Activated naive CD4-positive, alpha-beta T cell treated with anti-CD3 and anti-CD28 coated beads for 36 hours (primary cell): ENCODE measurements at regions of chr3 and their contacts with region 1.

Region 1: GRCh38 chr3:128426128-128426921 is 40.4 kb downstream of the DNAJB8 start:
- DNase-seq: peak; percentile 56
- H3K4me3 Mint-ChIP-seq: no peak overlapping the region
- H3K27ac Mint-ChIP-seq: no peak overlapping the region
- H3K4me1 Mint-ChIP-seq: no peaks in the 10 kb centered on the region
- H3K27me3 Mint-ChIP-seq: peaks cover 21% of the 10 kb centered on the region

Region 2: GRCh38 chr3:128095222-128095703 is 331.1 kb before region 1 on chr3:
- CTCF ChIA-PET with region 1: no interaction called
- intact Hi-C with region 1: loop called (anchors 5 kb)
- DNase-seq: peak; percentile 87
- H3K4me3 Mint-ChIP-seq: no peak overlapping the region
- H3K27ac Mint-ChIP-seq: no peak overlapping the region
- H3K4me1 Mint-ChIP-seq: peaks cover 5% of the 10 kb centered on the region
- H3K27me3 Mint-ChIP-seq: no peaks in the 10 kb centered on the region

Region 3: DNA sequence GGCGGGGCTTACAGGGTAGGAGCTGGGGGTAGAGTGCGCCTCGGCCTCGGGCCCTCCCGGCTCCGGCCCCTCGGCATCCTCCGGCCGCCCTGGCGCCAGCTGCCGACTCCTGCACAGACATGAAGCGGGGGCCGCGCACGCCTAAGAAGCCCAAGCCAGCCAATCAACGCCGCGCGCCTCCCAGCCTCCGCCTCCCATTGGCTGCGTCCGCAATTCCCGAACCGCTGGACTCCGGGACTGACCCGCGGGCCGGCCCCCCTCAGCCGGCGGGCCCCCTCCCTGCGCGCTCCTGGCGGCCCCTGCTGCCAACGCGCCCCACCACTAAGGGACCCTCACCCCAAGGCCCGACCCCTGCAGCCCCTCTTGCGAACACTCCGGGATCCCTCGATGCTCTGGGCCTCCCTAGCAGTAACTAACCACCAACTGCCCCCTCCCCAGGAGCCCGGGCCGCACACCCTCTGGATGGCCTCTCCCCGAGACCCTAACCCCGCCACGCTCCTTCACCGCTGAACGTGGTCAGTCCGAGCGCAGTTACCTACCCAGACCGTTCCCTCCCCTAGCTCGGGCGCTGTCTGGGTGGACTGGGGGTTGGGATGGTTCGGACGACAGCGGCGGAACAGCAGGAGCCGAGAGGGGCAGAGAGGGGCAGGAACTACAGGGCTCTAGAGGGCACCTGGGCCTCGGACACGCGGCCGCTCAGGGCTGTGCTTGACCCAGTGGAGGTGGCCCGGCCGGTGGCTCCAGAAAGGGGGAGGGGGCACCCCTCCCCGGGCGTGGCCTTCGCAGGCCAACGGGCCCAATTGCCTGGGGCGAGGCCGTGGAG is 61.7 kb after region 1 on chr3:
- CTCF ChIA-PET with region 1: interaction called, 19 read pairs
- intact Hi-C with region 1: loop called (anchors 1 kb)
- DNase-seq: peak; percentile 44
- H3K4me3 Mint-ChIP-seq: peak overlapping the region; percentile 72
- H3K27ac Mint-ChIP-seq: no peak overlapping the region
- H3K4me1 Mint-ChIP-seq: peaks cover 45% of the 10 kb centered on the region
- H3K27me3 Mint-ChIP-seq: peaks cover 72% of the 10 kb centered on the region

Region 4: DNA sequence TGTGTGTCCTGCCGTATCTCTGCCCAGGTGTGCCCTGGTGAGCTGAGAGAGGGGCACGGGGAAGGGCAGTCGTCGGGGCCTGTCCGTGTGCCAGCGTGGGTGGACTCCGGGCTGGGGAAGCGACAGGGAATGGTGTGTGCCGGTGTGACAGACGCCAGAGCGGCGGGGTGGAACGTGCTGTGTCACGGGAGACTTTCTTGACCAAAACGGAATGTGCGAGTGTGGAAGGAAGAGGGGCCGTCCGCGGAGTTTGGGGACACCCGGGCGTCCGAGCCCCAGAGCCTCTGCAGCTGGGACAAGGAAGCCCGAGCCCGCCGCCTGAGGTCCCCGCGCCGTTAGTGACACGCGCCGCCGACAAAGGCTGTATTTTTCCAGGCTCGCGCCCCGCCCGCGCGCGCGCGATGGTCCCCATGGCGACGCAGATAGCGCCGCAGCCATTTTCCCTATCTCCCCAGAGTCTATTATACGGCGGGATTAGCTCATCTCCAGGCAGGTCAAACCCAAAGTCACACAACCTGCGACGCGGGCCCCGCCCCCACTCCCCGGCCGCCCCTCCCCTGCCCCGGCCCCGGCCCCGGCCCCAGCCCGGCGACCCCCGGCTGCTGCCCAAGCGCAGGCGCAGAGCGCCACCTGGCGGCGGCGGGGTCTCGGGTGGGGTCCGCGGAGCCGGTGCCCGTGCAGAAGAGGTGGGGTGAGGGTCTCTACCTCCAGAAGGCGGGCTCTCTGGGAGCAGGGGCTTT is 71.2 kb after region 1 on chr3:
- CTCF ChIA-PET with region 1: interaction called, 63 read pairs
- intact Hi-C with region 1: loop called (anchors 1 kb)
- DNase-seq: peak; percentile 74
- H3K4me3 Mint-ChIP-seq: peak overlapping the region; percentile 68
- H3K27ac Mint-ChIP-seq: no peak overlapping the region
- H3K4me1 Mint-ChIP-seq: peaks cover 3% of the 10 kb centered on the region
- H3K27me3 Mint-ChIP-seq: peaks cover 49% of the 10 kb centered on the region

Region 5: GRCh38 chr3:128584412-128585020 is 158.2 kb after region 1 on chr3:
- CTCF ChIA-PET with region 1: interaction called, 8 read pairs
- intact Hi-C with region 1: loop called (anchors 1 kb)
- DNase-seq: peak; percentile 76
- H3K4me3 Mint-ChIP-seq: no peak overlapping the region
- H3K27ac Mint-ChIP-seq: no peak overlapping the region
- H3K4me1 Mint-ChIP-seq: no peaks in the 10 kb centered on the region
- H3K27me3 Mint-ChIP-seq: no peaks in the 10 kb centered on the region

Region 6: DNA sequence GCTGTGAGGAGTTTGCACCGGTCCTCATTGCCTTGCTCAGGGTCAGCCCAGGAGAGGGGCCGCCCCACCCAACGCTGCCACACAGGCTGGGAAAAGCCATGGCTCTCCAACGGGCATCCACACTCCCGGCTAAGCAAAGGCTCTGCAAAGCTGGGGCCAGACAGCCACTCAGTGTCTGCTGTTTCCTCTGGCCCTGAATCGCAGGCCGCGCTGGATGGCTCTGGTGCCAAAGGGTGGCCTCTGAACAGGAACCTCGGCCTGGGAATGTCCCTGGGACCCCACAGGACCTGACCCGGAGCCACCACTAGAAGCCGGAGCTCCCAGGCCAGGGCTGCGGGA is 181.4 kb after region 1 on chr3:
- CTCF ChIA-PET with region 1: interaction called, 11 read pairs
- intact Hi-C with region 1: loop called (anchors 1 kb)
- DNase-seq: no peak
- H3K4me3 Mint-ChIP-seq: no peak overlapping the region
- H3K27ac Mint-ChIP-seq: no peak overlapping the region
- H3K4me1 Mint-ChIP-seq: peaks cover 2% of the 10 kb centered on the region
- H3K27me3 Mint-ChIP-seq: peaks cover 2% of the 10 kb centered on the region